HepG2 (cell line): ENCODE measurements at regions of chr2 and their contacts with region 1.

Region 1: GRCh38 chr2:233053928-233054784 is 6.0 kb upstream of the INPP5D start:
- DNase-seq: peak; percentile 43
- ATAC-seq: peak; percentile 90
- H3K4me3 ChIP-seq: no peak overlapping the region
- H3K27ac ChIP-seq: no peak overlapping the region
- H3K4me1 ChIP-seq: peaks cover 22% of the 10 kb centered on the region
- H3K27me3 ChIP-seq: peaks cover 0 to 26% of the 10 kb centered on the region in 2 experiments; a peak in 4 of 5 replicates
- CTCF ChIP-seq: peak; percentile 98
- EP300 ChIP-seq: no peak
- POLR2A ChIP-seq: no peak
- RAD21 ChIP-seq: peak; percentile 89

Region 2: GRCh38 chr2:232979871-232980461 is 74.2 kb before region 1 on chr2:
- CTCF ChIA-PET with region 1: no interaction called
- POLR2A ChIA-PET with region 1: no interaction called
- in situ Hi-C with region 1: no loop called
- intact Hi-C with region 1: loop called (anchors 5 kb)
- DNase-seq: peak; percentile 27
- ATAC-seq: peak; percentile 48
- H3K4me3 ChIP-seq: no peak overlapping the region
- H3K27ac ChIP-seq: no peak overlapping the region
- H3K4me1 ChIP-seq: no peaks in the 10 kb centered on the region
- H3K27me3 ChIP-seq: no peaks in the 10 kb centered on the region
- CTCF ChIP-seq: peak; percentile 36
- EP300 ChIP-seq: no peak
- POLR2A ChIP-seq: no peak
- RAD21 ChIP-seq: no peak

Region 3: DNA sequence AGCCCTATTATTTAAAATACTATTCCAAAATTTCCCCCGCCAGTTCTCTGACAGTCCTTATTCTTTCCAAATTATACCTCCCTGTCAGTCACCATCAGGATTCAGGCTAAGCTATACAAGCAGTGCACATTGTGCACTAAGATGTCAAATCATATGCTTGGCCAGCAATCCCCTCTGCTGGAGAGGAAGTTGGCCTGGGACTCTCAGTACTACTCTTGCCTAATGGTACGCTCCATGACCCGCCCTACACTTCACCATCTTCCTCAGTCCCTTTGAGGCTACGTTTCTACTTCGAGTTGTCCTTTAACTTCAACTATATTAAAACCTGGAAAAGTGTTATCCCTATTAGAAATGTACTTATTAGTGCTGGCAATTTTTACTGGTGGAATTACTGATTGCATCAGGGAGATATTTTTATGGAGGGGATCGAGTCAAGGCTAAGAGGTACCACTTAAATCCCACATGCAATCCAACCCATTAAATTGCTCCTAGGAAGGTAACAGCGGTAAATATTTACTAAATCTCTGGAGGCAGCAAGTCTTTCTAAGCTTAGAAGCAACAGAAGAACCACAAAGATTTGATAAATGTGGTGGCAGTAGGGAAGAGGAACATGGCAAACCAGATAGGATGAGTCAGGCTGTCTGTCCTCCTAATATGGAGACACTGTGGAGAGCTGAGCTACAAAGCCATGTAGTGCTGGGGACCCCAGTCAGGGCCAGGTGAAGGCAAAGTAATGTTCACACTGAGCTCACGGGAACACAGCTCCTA is 509.7 kb after region 1 on chr2:
- CTCF ChIA-PET with region 1: no interaction called
- POLR2A ChIA-PET with region 1: no interaction called
- in situ Hi-C with region 1: no loop called
- intact Hi-C with region 1: loop called (anchors 5 kb)
- DNase-seq: no peak
- ATAC-seq: no peak
- H3K4me3 ChIP-seq: no peak overlapping the region
- H3K27ac ChIP-seq: no peak overlapping the region
- H3K4me1 ChIP-seq: peaks cover 16% of the 10 kb centered on the region
- H3K27me3 ChIP-seq: no peaks in the 10 kb centered on the region; a peak in 1 of 5 replicates
- CTCF ChIP-seq: no peak
- EP300 ChIP-seq: no peak
- POLR2A ChIP-seq: no peak
- RAD21 ChIP-seq: no peak

Region 4: DNA sequence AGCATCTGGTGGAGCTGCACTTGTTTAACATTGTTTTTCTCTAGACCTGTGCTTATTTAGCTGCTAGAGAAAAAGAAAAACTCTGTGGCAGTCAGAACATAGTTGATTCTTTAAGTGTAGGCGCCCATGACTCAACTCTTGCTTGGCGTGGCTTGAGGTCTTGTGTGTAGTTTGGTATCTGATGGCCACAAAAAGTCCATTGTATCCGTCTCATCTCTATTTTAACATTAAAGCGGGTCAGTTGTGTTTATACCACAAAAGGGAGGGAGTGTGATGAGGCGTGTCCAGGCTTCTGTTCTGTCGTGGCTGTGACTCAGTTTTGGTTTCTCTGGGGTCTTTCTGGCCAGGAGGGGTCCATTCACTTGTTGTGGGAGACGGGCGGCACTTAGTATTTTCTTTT is 539.0 kb after region 1 on chr2:
- CTCF ChIA-PET with region 1: no interaction called
- POLR2A ChIA-PET with region 1: no interaction called
- in situ Hi-C with region 1: no loop called
- intact Hi-C with region 1: no loop called
- DNase-seq: no peak
- ATAC-seq: no peak
- H3K4me3 ChIP-seq: no peak overlapping the region
- H3K27ac ChIP-seq: no peak overlapping the region
- H3K4me1 ChIP-seq: peaks cover 6% of the 10 kb centered on the region
- H3K27me3 ChIP-seq: peaks cover 0 to 2% of the 10 kb centered on the region in 2 experiments; a peak in 1 of 5 replicates
- CTCF ChIP-seq: no peak
- EP300 ChIP-seq: no peak
- POLR2A ChIP-seq: no peak
- RAD21 ChIP-seq: no peak